Calu3 (cell line): ENCODE measurements at regions of chr10 and their contacts with region 1.

Region 1: GRCh38 chr10:109883859-109884771 is 39.2 kb downstream of the XPNPEP1 start:
- DNase-seq: peak; percentile 74
- H3K4me3 Mint-ChIP-seq: no peak overlapping the region
- H3K27ac Mint-ChIP-seq: no peak overlapping the region
- H3K4me1 Mint-ChIP-seq: peaks cover 8% of the 10 kb centered on the region
- H3K27me3 Mint-ChIP-seq: no peaks in the 10 kb centered on the region
- CTCF ChIP-seq: peak; percentile 78

Region 2: GRCh38 chr10:109903590-109903947 is 19.5 kb after region 1 on chr10:
- CTCF ChIA-PET with region 1: no interaction called
- intact Hi-C with region 1: no loop called
- DNase-seq: no peak
- H3K4me3 Mint-ChIP-seq: no peak overlapping the region
- H3K27ac Mint-ChIP-seq: no peak overlapping the region
- H3K4me1 Mint-ChIP-seq: peaks cover 7% of the 10 kb centered on the region
- H3K27me3 Mint-ChIP-seq: no peaks in the 10 kb centered on the region
- CTCF ChIP-seq: no peak

Region 3: DNA sequence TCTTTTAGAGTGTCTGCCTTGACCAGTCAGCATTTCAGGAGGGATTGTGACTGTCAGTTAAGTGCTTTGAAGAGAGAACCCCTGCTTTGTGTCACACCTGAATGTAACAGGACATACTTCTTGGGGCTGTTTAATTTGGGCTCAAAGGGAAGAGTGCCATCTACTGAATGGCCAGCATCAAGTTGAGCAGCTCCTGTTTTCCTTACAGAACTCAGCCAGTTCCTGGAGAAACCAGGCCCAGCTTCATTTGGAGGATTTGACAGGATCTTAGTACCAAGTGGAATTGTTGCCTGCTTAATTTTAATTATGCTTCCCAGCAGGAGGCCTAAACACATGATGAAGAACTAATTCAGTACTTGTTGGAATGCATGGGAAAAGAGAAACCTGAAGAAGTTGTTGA is 131.9 kb after region 1 on chr10:
- CTCF ChIA-PET with region 1: interaction called, 26 read pairs
- intact Hi-C with region 1: loop called (anchors 2 kb)
- DNase-seq: no peak
- H3K4me3 Mint-ChIP-seq: no peak overlapping the region
- H3K27ac Mint-ChIP-seq: no peak overlapping the region
- H3K4me1 Mint-ChIP-seq: peaks cover 35% of the 10 kb centered on the region
- H3K27me3 Mint-ChIP-seq: no peaks in the 10 kb centered on the region
- CTCF ChIP-seq: no peak

Region 4: DNA sequence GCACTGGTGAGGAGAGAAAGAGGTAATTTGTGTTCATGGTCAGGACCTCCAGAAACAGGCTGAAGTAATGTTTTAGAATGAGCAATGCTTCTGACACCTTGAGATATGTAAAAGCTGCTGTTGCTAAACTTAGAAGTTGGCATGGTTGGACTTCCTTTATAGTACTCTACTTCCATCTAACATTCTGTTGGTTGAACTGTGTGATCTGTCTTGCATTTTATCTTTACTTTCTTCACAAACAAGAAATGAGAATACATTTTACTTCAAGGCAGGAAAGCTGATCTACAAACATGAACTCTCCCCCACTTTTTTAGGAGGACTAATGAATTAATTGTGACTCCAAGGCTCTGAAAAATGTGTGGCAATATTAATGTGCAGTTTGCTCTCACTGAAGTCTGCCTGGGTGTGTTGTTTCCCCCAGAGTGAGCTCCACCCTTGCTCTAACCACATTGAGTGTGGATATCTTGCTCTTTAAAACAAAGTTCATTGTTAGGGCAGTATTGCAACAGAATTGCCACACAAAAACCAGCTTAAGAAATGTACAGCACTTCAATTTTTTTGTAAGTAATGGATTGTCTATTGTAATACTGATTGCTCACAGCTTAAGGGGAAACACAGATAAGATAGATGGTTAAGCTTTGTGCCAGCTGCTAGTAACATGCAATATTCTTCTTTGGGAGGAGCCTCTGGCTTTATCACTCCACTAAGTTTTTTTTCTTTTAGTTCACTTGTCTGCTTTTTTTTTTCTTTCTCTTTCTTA is 192.6 kb after region 1 on chr10:
- CTCF ChIA-PET with region 1: interaction called, 10 read pairs
- intact Hi-C with region 1: no loop called
- DNase-seq: peak; percentile 46
- H3K4me3 Mint-ChIP-seq: peak overlapping the region; percentile 48
- H3K27ac Mint-ChIP-seq: peak overlapping the region; percentile 83
- H3K4me1 Mint-ChIP-seq: peaks cover 45% of the 10 kb centered on the region
- H3K27me3 Mint-ChIP-seq: no peaks in the 10 kb centered on the region
- CTCF ChIP-seq: no peak

Region 5: GRCh38 chr10:110101464-110102144 is 217.5 kb after region 1 on chr10:
- CTCF ChIA-PET with region 1: no interaction called
- intact Hi-C with region 1: loop called (anchors 10 kb)
- DNase-seq: no peak
- H3K4me3 Mint-ChIP-seq: no peak overlapping the region
- H3K27ac Mint-ChIP-seq: no peak overlapping the region
- H3K4me1 Mint-ChIP-seq: no peaks in the 10 kb centered on the region
- H3K27me3 Mint-ChIP-seq: no peaks in the 10 kb centered on the region
- CTCF ChIP-seq: no peak

Region 6: DNA sequence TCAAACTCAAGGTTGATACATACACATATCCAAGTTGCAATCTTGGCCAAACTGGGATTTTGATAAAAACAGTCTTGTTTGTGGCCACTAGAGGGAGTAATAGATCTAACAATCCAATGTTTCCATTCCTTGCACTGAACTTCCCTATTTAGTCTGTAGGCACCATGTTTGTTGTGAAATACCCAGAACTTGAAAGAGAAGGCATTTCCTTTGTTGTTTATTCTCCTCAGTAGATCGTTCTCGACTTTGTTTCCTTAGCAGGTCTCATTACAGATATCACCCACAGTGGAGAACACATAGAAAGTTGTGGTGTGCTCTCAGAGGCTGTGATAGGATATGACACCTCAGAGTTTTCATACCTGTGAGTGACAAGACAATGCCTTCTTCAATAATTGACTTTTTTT is 253.0 kb after region 1 on chr10:
- CTCF ChIA-PET with region 1: interaction called, 4 read pairs
- intact Hi-C with region 1: loop called (anchors 1 kb)
- DNase-seq: no peak
- H3K4me3 Mint-ChIP-seq: no peak overlapping the region
- H3K27ac Mint-ChIP-seq: no peak overlapping the region
- H3K4me1 Mint-ChIP-seq: peaks cover 6% of the 10 kb centered on the region
- H3K27me3 Mint-ChIP-seq: no peaks in the 10 kb centered on the region
- CTCF ChIP-seq: peak; percentile 70

Region 7: DNA sequence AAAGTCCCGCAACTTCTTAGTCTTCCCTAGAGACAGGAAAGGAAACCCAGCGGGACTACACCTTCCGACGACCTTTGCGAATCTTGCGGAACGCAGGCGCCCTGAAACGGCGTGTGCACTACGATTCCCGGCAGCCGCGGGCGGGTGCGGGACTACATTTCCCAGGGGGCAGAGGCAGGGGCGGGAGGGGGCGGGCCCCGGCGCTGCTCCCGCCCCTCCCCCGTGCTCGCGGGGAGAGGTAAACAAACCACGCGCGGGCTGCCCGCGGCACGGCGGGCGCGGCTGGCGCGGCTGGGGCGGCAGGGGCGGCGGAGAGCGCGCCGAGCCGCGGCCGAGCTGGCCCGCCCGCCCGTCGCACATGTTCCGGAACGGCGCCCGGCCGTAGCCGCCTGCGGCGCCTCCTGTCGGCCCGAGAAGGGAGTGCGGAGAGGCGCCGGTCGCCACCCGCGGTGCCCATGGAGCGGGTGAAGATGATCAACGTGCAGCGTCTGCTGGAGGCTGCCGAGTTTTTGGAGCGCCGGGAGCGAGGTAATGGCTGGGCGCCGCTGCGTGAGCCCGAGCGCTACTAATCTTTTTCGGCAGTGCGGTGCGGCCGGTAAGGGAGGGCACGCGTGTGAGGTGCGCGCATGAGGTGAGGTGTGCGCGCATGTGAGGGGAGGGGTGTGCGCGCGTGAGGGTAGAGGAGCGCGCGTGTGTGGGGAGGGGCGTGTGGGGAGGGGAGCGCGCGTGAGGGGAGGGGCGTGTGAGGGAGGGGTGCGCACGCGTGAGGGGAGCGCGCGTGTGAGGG is 341.8 kb after region 1 on chr10:
- CTCF ChIA-PET with region 1: no interaction called
- intact Hi-C with region 1: loop called (anchors 5 kb)
- DNase-seq: peak; percentile 82
- H3K4me3 Mint-ChIP-seq: peak overlapping the region; percentile 76
- H3K27ac Mint-ChIP-seq: peak overlapping the region; percentile 82
- H3K4me1 Mint-ChIP-seq: peaks cover 16% of the 10 kb centered on the region
- H3K27me3 Mint-ChIP-seq: no peaks in the 10 kb centered on the region
- CTCF ChIP-seq: no peak

Region 8: GRCh38 chr10:110279407-110279986 is 395.4 kb after region 1 on chr10:
- CTCF ChIA-PET with region 1: no interaction called
- intact Hi-C with region 1: loop called (anchors 1 kb)
- DNase-seq: peak; percentile 39
- H3K4me3 Mint-ChIP-seq: no peak overlapping the region
- H3K27ac Mint-ChIP-seq: no peak overlapping the region
- H3K4me1 Mint-ChIP-seq: peaks cover 5% of the 10 kb centered on the region
- H3K27me3 Mint-ChIP-seq: no peaks in the 10 kb centered on the region
- CTCF ChIP-seq: peak; percentile 26